ENCODE measurements at regions of chr11 and their contacts with region 1.

Region 1: DNA sequence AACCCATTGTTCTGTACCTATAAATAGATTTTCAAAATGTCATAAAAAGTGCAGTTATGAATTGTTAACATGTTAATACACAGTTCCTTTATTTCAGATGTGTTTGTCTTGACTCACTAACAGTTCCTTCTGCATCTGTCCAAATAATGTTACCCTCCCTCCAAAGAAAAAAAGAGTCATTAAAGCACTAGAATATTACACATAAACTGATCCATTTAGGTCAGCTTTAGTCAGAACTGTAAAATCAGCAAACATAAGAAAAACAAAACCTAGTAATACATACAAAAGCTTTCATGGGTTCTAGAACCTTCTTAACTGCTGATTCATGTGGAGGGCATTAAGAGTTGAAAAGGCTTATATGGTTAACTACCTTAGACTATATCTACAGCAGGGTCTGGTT is 65.4 kb downstream of the SESN3 start:
- DNase-seq: no peak
- H3K4me3 ChIP-seq: no peak overlapping the region
- H3K27ac ChIP-seq: no peak overlapping the region
- H3K4me1 ChIP-seq: no peaks in the 10 kb centered on the region
- H3K27me3 ChIP-seq: no peaks in the 10 kb centered on the region
- CTCF ChIP-seq: no peak

Region 2: DNA sequence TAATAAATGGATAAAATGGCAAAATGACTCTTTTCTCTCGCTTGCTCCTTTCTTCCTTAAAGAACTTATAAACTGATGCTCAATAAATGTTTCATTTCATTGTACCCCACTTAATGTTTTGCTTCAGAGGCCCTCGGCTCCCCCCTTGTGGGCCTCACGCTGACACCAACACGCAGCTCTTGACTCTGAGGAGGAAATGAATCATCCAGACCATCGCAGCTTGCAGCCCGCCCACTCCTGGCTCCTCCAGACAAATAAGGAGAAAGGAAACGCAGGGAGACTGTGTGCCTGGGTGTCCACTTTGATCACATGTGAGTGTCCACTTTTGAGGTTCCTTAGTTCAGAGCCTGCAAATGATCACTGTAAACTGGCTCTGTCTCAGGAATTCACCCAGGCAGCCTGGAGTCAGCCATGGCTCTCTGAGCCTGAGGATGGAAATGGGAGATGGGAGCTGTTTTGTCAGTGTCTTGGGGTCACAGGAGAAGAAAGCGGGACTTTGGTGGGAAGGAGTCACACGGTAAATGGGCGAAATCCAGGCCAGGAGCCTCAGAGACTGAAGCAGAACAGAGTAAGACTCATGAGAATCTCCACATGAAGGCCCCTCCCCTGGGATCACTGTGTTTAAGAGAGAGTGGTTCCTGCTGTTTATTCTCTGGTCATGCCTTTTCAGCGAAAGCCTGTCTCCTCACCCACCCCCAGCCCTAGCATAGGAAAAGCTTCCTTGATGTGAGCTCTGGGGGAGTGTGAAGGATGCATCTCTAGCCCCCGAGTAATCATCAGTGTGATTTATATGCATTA is 288.8 kb before region 1 on chr11:
- CTCF ChIA-PET with region 1: no interaction called
- POLR2A ChIA-PET with region 1: interaction called, 11 read pairs
- intact Hi-C with region 1: no loop called
- DNase-seq: peak in 1 of 2 experiments; percentile 40
- H3K4me3 ChIP-seq: no peak overlapping the region
- H3K27ac ChIP-seq: no peak overlapping the region
- H3K4me1 ChIP-seq: peaks cover 27% of the 10 kb centered on the region
- H3K27me3 ChIP-seq: no peaks in the 10 kb centered on the region
- CTCF ChIP-seq: no peak

Region 3: DNA sequence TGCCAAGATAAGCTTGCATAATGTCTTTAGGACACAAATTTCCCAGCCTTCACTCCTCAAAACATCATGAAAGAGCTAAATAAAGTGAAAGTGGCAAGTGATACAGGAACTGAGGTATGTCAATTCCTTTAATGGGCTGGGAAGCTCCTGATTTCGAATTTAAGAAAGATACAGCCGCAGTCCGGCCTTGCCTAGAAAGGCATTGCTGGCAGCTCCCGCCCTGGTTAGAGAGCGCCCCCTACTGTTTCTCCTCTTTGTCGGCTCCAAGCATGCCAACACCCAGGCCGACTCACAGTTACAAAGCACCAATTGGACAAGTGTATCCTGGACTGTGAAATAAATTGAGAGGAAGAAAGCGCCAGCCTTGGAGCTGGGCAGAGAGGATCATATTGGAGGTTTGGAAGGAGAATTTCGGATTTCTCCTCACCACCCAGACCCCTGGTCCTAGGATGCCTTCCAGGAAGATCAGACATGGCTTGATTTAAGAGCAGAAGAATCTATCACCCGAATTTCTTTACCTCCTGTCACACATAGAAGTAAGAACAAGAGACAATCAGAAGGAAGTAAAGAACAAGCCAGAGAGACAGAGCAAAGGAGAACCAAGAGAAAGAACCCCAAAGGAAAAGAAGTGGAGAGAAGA is 540.0 kb after region 1 on chr11:
- CTCF ChIA-PET with region 1: no interaction called
- POLR2A ChIA-PET with region 1: no interaction called
- intact Hi-C with region 1: loop called (anchors 5 kb)
- DNase-seq: peak; percentile 49 to 50
- H3K4me3 ChIP-seq: no peak overlapping the region
- H3K27ac ChIP-seq: no peak overlapping the region
- H3K4me1 ChIP-seq: no peaks in the 10 kb centered on the region
- H3K27me3 ChIP-seq: peaks cover 27% of the 10 kb centered on the region
- CTCF ChIP-seq: peak; percentile 87